ENCODE measurements at regions of chr1 and their contacts with region 1.

Region 1: GRCh38 chr1:11645670-11646265 is 8.5 kb downstream of the FBXO2 start:
- DNase-seq: peak; percentile 90
- ATAC-seq: peak; percentile 44
- H3K4me3 ChIP-seq: no peak overlapping the region
- H3K27ac ChIP-seq: no peak overlapping the region
- H3K4me1 ChIP-seq: peaks cover 20% of the 10 kb centered on the region
- H3K27me3 ChIP-seq: no peaks in the 10 kb centered on the region
- CTCF ChIP-seq: peak; percentile 82

Region 2: DNA sequence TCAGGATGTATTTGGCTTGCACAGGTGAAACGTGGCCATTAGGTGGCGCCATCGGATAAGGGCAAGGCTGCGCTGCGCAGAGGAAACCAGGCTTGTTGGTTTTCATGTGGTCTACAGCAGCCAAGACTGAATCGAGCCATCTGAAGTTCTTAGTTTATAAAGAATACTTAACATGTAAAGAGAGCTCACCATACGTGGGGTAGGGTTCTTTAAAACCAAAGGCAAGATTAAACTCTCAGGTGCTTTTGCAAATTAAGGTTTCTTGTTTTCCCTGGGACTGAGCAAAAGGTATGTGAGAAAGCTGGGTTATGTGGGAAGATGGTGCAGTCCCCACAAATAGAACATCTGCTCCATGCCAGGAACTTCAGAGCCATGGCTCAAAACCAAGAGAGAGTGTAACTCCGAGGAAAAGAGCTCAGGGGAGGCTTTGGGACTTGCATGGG is 608.0 kb before region 1 on chr1:
- intact Hi-C with region 1: loop called (anchors 5 kb)
- DNase-seq: peak; percentile 90
- ATAC-seq: peak; percentile 96
- H3K4me3 ChIP-seq: no peak overlapping the region
- H3K27ac ChIP-seq: no peak overlapping the region
- H3K4me1 ChIP-seq: no peaks in the 10 kb centered on the region
- H3K27me3 ChIP-seq: no peaks in the 10 kb centered on the region
- CTCF ChIP-seq: peak; percentile 97

Region 3: GRCh38 chr1:11248155-11248554 is 397.6 kb before region 1 on chr1:
- intact Hi-C with region 1: loop called (anchors 10 kb)
- DNase-seq: no peak
- ATAC-seq: no peak
- H3K4me3 ChIP-seq: no peak overlapping the region
- H3K27ac ChIP-seq: no peak overlapping the region
- H3K4me1 ChIP-seq: no peaks in the 10 kb centered on the region
- H3K27me3 ChIP-seq: no peaks in the 10 kb centered on the region
- CTCF ChIP-seq: no peak

Region 4: DNA sequence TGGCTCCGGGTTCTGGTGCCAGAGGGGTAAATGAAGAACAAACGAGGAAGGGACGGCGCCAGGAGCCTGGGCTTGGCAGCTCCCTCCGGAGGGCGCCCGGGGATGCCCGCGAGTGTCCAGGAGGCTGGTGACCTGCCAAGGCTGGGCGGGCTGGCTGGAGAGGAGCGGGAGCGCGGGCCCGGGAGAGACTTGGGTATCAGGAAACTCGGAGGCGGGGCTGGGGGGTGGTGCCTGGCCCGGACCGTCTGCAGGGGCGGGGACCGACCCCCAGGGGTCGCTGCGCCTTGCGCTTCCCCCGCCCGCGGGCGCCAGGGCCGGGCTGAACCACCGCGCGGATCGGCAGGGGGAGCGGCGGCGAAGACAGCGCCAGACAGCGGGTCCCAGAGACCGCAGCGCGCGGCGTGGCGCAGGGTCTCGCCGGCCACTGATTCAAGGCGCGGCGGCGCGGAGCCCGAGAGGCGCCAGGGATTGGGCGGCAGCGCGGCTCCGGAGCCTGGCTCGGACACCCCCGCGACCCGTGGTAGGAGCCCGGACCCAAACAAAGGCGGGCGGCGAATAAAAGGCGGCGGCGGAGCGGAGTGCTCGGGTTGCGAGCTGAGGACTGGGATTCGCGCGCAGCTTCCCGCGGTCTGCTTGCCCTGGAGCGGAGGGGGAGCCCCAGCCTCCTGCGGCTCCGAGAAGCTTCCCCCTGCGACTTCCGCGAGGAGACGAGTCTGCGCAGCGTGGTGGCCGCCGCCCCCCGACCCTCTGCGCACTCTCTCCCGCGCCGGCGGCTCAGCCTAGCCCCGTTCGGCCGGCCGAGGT is 167.0 kb before region 1 on chr1 and contains the start of gene DISP3:
- intact Hi-C with region 1: loop called (anchors 10 kb)
- DNase-seq: peak; percentile 75
- ATAC-seq: peak; percentile 86
- H3K4me3 ChIP-seq: peak within 1 kb of the TSS; percentile 53
- H3K27ac ChIP-seq: no peak within 1 kb of the TSS
- H3K4me1 ChIP-seq: no peaks in the 10 kb centered on the region
- H3K27me3 ChIP-seq: peaks cover 77% of the 10 kb centered on the region
- CTCF ChIP-seq: peak; percentile 47
- total RNA-seq, gene DISP3: not detected

Region 5: DNA sequence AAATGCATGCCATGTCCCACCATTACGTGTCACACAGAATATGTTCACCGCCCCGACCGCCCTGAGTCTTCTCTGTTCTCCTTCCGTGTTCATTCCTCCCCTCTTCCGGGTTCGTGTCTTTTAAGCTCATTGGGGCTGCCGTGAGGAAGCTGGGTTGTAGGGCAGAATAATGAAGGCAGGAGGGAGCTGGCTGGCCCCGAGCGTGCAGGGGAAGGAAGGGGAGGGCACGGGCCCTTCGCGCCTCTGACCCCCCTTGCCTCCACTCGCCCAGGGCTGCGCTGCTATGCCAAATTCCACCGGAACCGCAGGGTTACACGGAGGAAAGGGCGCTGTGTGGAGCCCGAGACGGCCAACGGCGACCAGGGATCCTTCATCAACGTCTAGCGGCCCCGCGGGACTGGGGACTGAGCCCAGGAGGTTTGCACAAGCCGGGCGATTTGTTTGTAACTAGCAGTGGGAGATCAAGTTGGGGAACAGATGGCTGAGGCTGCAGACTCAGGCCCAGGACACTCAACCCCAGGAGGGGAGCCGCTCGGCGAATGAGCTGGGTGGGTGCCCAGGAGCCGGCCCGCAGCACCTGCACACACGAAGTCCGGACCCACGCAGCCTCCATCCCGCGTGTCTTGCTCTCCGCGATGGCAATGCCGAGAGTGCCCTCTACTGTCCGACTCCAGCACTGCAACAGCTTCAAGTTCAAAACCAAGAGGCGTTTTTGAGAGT is 73.7 kb after region 1 on chr1:
- intact Hi-C with region 1: loop called (anchors 5 kb)
- DNase-seq: peak; percentile 89
- ATAC-seq: peak; percentile 94
- H3K4me3 ChIP-seq: peak overlapping the region; percentile 38
- H3K27ac ChIP-seq: peak overlapping the region; percentile 70
- H3K4me1 ChIP-seq: no peaks in the 10 kb centered on the region
- H3K27me3 ChIP-seq: no peaks in the 10 kb centered on the region
- CTCF ChIP-seq: peak; percentile 97